Activated T-helper 1 cell treated with anti-CD3 and anti-CD28 coated beads, Interleukin-12 subunit alpha, Interleukin-12 subunit beta, Interleukin-2, Interleukin-4 antibody, amounts not matched to agents 30 ng/mL and 10 ng/mL and 1 ng/mL, durations not matched to agents 14 hours and 24 hours and 36 hours (primary cell): ENCODE measurements at regions of chr3 and their contacts with region 1.

Region 1: DNA sequence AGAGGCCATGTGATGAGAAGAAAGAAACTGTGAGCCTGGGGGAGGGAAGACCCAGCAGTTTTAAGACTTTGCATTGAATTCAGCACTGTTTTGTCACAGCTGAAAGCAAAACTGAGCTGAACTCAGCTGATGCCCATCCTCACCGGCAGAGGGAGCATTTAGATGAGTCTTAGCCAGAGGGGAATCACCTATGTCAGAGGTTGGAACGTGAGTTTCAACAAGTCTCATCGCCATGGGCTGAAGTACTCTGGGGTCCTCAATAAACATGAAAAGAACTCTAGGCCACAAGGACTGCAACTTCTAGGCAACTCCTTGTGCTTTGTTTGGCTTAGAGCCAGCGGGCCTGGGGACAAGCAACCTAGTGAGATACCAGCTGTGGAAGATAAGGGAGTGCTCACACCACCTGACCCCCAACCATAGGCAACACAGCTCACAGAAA is 324.5 kb downstream of the TBL1XR1 start:
- DNase-seq: peak; percentile 30
- H3K4me3 Mint-ChIP-seq: no peak overlapping the region
- H3K27ac Mint-ChIP-seq: no peak overlapping the region
- H3K4me1 Mint-ChIP-seq: peaks cover 8% of the 10 kb centered on the region
- H3K27me3 Mint-ChIP-seq: no peaks in the 10 kb centered on the region

Region 2: GRCh38 chr3:176554791-176555654 is 317.8 kb before region 1 on chr3:
- intact Hi-C with region 1: no loop called
- DNase-seq: no peak
- H3K4me3 Mint-ChIP-seq: no peak overlapping the region
- H3K27ac Mint-ChIP-seq: no peak overlapping the region
- H3K4me1 Mint-ChIP-seq: no peaks in the 10 kb centered on the region
- H3K27me3 Mint-ChIP-seq: no peaks in the 10 kb centered on the region

Region 3: DNA sequence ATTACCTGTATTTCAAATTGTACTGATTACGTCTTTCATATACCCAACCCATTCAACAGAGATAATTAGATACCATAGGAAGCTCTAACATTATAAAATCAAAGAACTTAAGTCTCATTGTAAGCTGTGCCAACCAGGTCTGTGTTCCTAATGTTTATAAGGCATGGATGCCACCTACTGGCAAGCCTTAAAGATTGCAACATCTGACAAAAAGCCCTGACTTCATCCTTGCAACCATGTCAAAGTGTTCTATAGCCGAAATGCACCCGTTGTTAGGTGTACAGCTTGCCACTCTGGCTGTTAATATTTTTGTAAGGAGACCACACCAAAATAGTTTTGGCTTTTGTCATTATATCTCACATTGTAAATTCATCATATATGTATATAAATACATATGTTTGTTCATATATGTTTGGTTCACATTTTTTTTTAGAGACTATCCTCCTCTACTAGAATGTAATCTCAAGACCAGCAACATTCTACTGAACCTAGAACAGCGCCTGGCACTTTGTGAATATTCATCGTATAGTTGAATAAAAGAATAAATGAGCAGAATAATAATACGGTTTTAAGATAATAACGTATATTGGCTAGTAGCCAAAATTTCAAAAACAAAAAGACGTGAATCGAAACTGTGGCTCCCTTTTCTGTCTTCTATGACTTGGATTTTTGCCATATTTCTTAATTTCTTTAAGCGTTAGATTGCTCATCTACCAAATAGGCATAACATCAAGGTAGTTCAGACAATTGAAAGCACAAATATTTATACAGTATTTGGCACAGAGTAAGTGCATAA is 66.4 kb after region 1 on chr3:
- intact Hi-C with region 1: loop called (anchors 1 kb)
- DNase-seq: peak; percentile 4
- H3K4me3 Mint-ChIP-seq: no peak overlapping the region
- H3K27ac Mint-ChIP-seq: no peak overlapping the region
- H3K4me1 Mint-ChIP-seq: no peaks in the 10 kb centered on the region
- H3K27me3 Mint-ChIP-seq: peaks cover 5% of the 10 kb centered on the region

Region 4: GRCh38 chr3:177777699-177778098 is 904.9 kb after region 1 on chr3:
- intact Hi-C with region 1: loop called (anchors 2 kb)
- DNase-seq: no peak
- H3K4me3 Mint-ChIP-seq: no peak overlapping the region
- H3K27ac Mint-ChIP-seq: no peak overlapping the region
- H3K4me1 Mint-ChIP-seq: peaks cover 14% of the 10 kb centered on the region
- H3K27me3 Mint-ChIP-seq: no peaks in the 10 kb centered on the region

Region 5: GRCh38 chr3:178385280-178385952 is 1512.6 kb after region 1 on chr3:
- intact Hi-C with region 1: loop called (anchors 1 kb)
- DNase-seq: no peak
- H3K4me3 Mint-ChIP-seq: no peak overlapping the region
- H3K27ac Mint-ChIP-seq: no peak overlapping the region
- H3K4me1 Mint-ChIP-seq: no peaks in the 10 kb centered on the region
- H3K27me3 Mint-ChIP-seq: no peaks in the 10 kb centered on the region